Aorta (tissue), 5 donors: ENCODE measurements at regions of chr10 and their contacts with region 1.

Region 1: DNA sequence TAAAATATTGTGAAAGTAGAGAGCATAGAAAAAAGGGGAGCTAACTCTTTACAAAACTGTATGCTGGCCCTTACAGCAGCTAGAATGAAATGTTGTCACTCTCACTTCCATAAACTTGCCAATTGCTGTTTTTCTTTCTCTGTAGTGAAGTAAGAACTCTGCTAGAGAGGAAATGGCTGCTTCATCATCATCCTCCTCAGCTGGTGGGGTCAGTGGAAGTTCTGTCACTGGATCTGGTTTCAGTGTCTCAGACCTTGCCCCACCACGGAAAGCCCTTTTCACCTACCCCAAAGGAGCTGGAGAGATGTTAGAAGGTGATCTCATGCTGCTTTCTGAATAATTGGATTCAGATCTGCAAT is 7.6 kb upstream of the ASCC1 start:
- DNase-seq: no peak
- ATAC-seq: peak; percentile 67
- H3K4me3 ChIP-seq: no peak overlapping the region
- H3K27ac ChIP-seq: peak overlapping the region; percentile 67 to 80
- H3K4me1 ChIP-seq: peaks cover 1 to 3% of the 10 kb centered on the region in 2 donors
- H3K27me3 ChIP-seq: no peaks in the 10 kb centered on the region

Region 2: DNA sequence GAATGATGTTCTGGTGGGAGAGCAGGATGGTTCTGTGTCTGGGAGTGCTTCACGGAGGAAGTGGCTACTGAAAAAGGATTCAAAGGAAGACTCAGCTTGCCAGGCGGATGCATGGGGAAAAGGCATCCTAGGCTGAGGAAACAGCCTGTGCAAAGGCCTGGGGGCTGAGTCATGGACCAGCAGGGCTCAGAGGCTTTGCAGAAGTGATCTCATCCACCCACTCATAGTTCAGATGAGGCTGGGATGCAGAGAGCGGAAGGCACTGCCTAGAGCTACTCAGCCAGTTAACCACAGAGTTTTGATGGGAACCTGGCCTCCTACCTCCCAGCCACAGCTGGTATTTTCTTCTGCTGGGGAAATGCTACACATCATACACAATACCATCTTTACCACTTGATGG is 1567.2 kb before region 1 on chr10:
- intact Hi-C with region 1: no loop called
- DNase-seq: peak in 1 of 2 donors; percentile 71
- ATAC-seq: no peak
- H3K4me3 ChIP-seq: no peak overlapping the region
- H3K27ac ChIP-seq: no peak overlapping the region
- H3K4me1 ChIP-seq: peaks cover 0 to 3% of the 10 kb centered on the region in 2 donors
- H3K27me3 ChIP-seq: no peaks in the 10 kb centered on the region

Region 3: GRCh38 chr10:72260588-72261322 is 37.0 kb after region 1 on chr10:
- intact Hi-C with region 1: loop called in 1 of 2 experiments (anchors 5 kb)
- DNase-seq: peak; percentile 88 to 91
- ATAC-seq: peak; percentile 93
- H3K4me3 ChIP-seq: peak overlapping the region; percentile 24 to 42
- H3K27ac ChIP-seq: peak overlapping the region in 1 of 2 donors; percentile 86
- H3K4me1 ChIP-seq: peaks cover 3 to 4% of the 10 kb centered on the region in 2 donors
- H3K27me3 ChIP-seq: no peaks in the 10 kb centered on the region

Region 4: GRCh38 chr10:72292223-72292691 is 68.5 kb after region 1 on chr10:
- intact Hi-C with region 1: no loop called
- DNase-seq: no peak
- ATAC-seq: no peak
- H3K4me3 ChIP-seq: no peak overlapping the region
- H3K27ac ChIP-seq: no peak overlapping the region
- H3K4me1 ChIP-seq: no peaks in the 10 kb centered on the region
- H3K27me3 ChIP-seq: no peaks in the 10 kb centered on the region